Heart left ventricle (tissue), 16 donors: ENCODE measurements at regions of chr6 and their contacts with region 1.

Region 1: GRCh38 chr6:16409531-16410441 is 171.4 kb downstream of the GMPR start:
- DNase-seq: peak in 4 of 5 donors; percentile 48 to 68 (median 58)
- ATAC-seq: peak in 3 of 4 donors; percentile 53 to 70 (median 61)
- H3K4me3 ChIP-seq: no peak overlapping the region
- H3K27ac ChIP-seq: no peak overlapping the region
- H3K4me1 ChIP-seq: peaks cover 0 to 55% (median 17%) of the 10 kb centered on the region in 12 donors
- H3K27me3 ChIP-seq: no peaks in the 10 kb centered on the region
- CTCF ChIP-seq: peak; percentile 64 to 88 (median 80)
- POLR2A ChIP-seq: no peak

Region 2: GRCh38 chr6:16238057-16238962 is 171.5 kb before region 1 on chr6 and contains the start of gene GMPR:
- intact Hi-C with region 1: loop called in 1 of 10 experiments (anchors 10 kb)
- DNase-seq: peak; percentile 82 to 91 (median 88)
- ATAC-seq: peak; percentile 53 to 84 (median 80)
- H3K4me3 ChIP-seq: peak within 1 kb of the TSS; percentile 50 to 88 (median 76)
- H3K27ac ChIP-seq: peak within 1 kb of the TSS; percentile 59 to 92 (median 86)
- H3K4me1 ChIP-seq: peaks cover 0 to 62% (median 28%) of the 10 kb centered on the region in 12 donors
- H3K27me3 ChIP-seq: no peaks in the 10 kb centered on the region
- CTCF ChIP-seq: peak in 4 of 12 donors; percentile 12 to 27 (median 20)
- POLR2A ChIP-seq: peak in 1 of 2 donors; percentile 58
- total RNA-seq, gene GMPR: 67.8 to 160 (median 115) TPM

Region 3: GRCh38 chr6:16305246-16305725 is 104.5 kb before region 1 on chr6:
- intact Hi-C with region 1: no loop called
- DNase-seq: no peak
- ATAC-seq: no peak
- H3K4me3 ChIP-seq: no peak overlapping the region
- H3K27ac ChIP-seq: no peak overlapping the region
- H3K4me1 ChIP-seq: peaks cover 0 to 9% (median 0%) of the 10 kb centered on the region in 12 donors
- H3K27me3 ChIP-seq: no peaks in the 10 kb centered on the region
- CTCF ChIP-seq: no peak
- POLR2A ChIP-seq: no peak

Region 4: DNA sequence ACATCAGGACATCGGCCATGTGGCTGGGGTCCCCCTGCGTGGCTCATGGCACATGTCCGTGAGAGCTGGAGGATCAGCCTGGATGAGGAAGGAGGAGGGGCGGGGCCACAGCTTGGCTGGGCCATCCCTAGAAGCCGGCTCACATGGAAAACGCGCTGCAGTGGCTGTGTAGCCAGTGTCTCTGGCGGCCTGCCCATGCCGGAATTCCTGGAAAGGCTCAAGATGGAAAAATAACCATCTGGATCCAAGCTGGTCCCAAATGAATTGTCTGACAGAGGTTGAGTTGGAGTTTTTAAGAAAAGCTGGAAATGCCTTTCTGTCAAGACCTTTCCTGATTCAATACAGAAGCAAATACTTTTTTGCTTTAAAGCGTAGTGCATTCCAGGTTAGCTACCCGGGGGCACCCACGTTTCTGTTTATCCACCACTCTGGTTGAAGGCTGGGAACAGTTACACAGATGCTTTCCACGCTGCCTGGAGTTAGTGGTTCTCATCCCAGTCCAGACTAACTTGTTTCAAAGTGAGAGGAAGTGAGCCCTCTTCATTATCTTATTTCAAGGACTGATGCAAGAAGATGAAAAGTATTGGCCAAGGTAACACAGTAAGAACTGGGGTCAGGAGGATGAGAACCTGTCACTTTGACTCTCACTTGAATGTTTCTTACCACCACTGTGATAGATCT is 72.4 kb before region 1 on chr6:
- intact Hi-C with region 1: loop called (anchors 1 to 5 kb)
- DNase-seq: peak; percentile 95 to 97 (median 96)
- ATAC-seq: peak; percentile 84 to 93 (median 90)
- H3K4me3 ChIP-seq: peak overlapping the region in 1 of 12 donors; percentile 19
- H3K27ac ChIP-seq: peak overlapping the region in 11 of 12 donors; percentile 9 to 62 (median 45)
- H3K4me1 ChIP-seq: peaks cover 13 to 79% (median 49%) of the 10 kb centered on the region in 12 donors
- H3K27me3 ChIP-seq: no peaks in the 10 kb centered on the region
- CTCF ChIP-seq: no peak
- POLR2A ChIP-seq: no peak

Region 5: GRCh38 chr6:16503970-16504415 is 94.2 kb after region 1 on chr6:
- intact Hi-C with region 1: loop called in 1 of 10 experiments (anchors 10 kb)
- DNase-seq: no peak
- ATAC-seq: peak in 1 of 4 donors; percentile 13
- H3K4me3 ChIP-seq: no peak overlapping the region
- H3K27ac ChIP-seq: no peak overlapping the region
- H3K4me1 ChIP-seq: peaks cover 0 to 26% (median 14%) of the 10 kb centered on the region in 12 donors
- H3K27me3 ChIP-seq: no peaks in the 10 kb centered on the region
- CTCF ChIP-seq: no peak
- POLR2A ChIP-seq: no peak

Region 6: DNA sequence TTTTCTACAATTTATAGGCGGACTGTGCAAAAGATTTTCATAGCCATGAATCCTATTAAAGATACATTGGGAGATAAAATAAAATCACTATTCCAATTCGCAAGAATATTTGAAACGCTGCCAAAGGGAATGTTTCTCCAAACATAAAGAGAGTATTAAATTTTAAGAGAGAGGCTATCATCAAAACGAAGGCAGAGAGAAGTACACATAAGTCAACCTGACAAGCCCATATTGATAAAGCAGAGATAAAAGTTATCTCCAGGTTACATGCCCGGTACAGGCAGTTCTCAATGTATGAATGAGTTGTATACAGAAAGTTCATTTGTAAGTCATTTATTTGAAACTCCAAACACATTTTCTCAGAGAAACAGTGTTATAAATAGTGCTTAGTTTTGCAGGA is 158.3 kb after region 1 on chr6:
- intact Hi-C with region 1: no loop called
- DNase-seq: no peak
- ATAC-seq: no peak
- H3K4me3 ChIP-seq: no peak overlapping the region
- H3K27ac ChIP-seq: no peak overlapping the region
- H3K4me1 ChIP-seq: peaks cover 0 to 21% (median 6%) of the 10 kb centered on the region in 12 donors
- H3K27me3 ChIP-seq: no peaks in the 10 kb centered on the region
- CTCF ChIP-seq: no peak
- POLR2A ChIP-seq: no peak

Region 7: GRCh38 chr6:16770701-16771569 is 361.1 kb after region 1 on chr6:
- intact Hi-C with region 1: loop called in 4 of 10 experiments (anchors 10 kb)
- DNase-seq: peak; percentile 80 to 91 (median 84)
- ATAC-seq: peak; percentile 78 to 91 (median 85)
- H3K4me3 ChIP-seq: no peak overlapping the region
- H3K27ac ChIP-seq: peak overlapping the region in 4 of 12 donors; percentile 11 to 63 (median 28)
- H3K4me1 ChIP-seq: peaks cover 0 to 45% (median 31%) of the 10 kb centered on the region in 12 donors
- H3K27me3 ChIP-seq: no peaks in the 10 kb centered on the region
- CTCF ChIP-seq: peak; percentile 88 to 99 (median 93)
- POLR2A ChIP-seq: no peak

Region 8: GRCh38 chr6:17086469-17086868 is 676.7 kb after region 1 on chr6:
- intact Hi-C with region 1: loop called in 1 of 10 experiments (anchors 10 kb)
- DNase-seq: peak in 3 of 5 donors; percentile 45 to 46 (median 46)
- ATAC-seq: peak; percentile 75 to 85 (median 78)
- H3K4me3 ChIP-seq: no peak overlapping the region
- H3K27ac ChIP-seq: no peak overlapping the region
- H3K4me1 ChIP-seq: peaks cover 0 to 7% (median 0%) of the 10 kb centered on the region in 12 donors
- H3K27me3 ChIP-seq: no peaks in the 10 kb centered on the region
- CTCF ChIP-seq: peak; percentile 44 to 72 (median 66)
- POLR2A ChIP-seq: no peak